PC-3 (cell line): ENCODE measurements at regions of chr16 and their contacts with region 1.

Region 1: GRCh38 chr16:52912565-52913173 is 140.0 kb downstream of the CHD9NB start:
- DNase-seq: peak; percentile 66
- ATAC-seq: peak; percentile 64; the same call in 1 of the 2 replicates
- H3K4me3 ChIP-seq: no peak overlapping the region
- H3K27ac ChIP-seq: no peak overlapping the region
- H3K4me1 ChIP-seq: no peaks in the 10 kb centered on the region
- H3K27me3 ChIP-seq: no peaks in the 10 kb centered on the region
- CTCF ChIP-seq: peak; percentile 75

Region 2: DNA sequence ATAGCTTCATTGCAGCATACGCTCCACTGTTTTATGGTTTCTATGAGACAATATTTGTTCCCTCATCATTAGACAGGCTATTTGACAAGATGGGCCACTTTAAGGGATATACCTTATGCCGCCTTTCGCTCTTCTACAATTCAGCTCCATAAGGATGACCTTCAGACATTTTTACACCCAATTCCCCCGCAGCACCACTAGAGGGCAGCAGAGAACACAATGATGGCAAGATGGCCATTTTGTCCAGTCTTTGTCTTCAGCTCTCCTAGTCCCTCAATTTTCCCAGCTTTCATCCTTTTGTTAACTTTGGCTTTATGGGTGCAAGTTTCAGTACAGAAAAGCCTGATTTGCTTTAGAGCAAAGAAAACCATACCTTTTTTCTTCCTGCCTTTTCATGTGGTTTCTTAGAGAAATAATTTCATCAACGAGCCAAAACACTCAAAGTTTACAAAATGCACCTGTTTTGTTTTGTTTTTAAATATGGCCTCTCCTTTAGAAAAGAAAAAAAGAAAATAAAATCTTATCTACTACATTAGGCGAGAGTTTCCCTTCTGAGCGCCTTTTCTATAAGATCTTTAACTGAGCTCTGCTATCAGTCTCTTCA is 721.0 kb before region 1 on chr16:
- CTCF ChIA-PET with region 1: interaction called, 4 read pairs
- POLR2A ChIA-PET with region 1: no interaction called
- intact Hi-C with region 1: loop called (anchors 5 kb)
- DNase-seq: peak; percentile 63
- ATAC-seq: no peak
- H3K4me3 ChIP-seq: no peak overlapping the region
- H3K27ac ChIP-seq: no peak overlapping the region
- H3K4me1 ChIP-seq: no peaks in the 10 kb centered on the region
- H3K27me3 ChIP-seq: no peaks in the 10 kb centered on the region
- CTCF ChIP-seq: peak; percentile 77

Region 3: GRCh38 chr16:52861614-52862022 is 51.1 kb before region 1 on chr16:
- CTCF ChIA-PET with region 1: no interaction called
- POLR2A ChIA-PET with region 1: no interaction called
- intact Hi-C with region 1: no loop called
- DNase-seq: peak; percentile 6
- ATAC-seq: no peak
- H3K4me3 ChIP-seq: no peak overlapping the region
- H3K27ac ChIP-seq: no peak overlapping the region
- H3K4me1 ChIP-seq: no peaks in the 10 kb centered on the region
- H3K27me3 ChIP-seq: no peaks in the 10 kb centered on the region
- CTCF ChIP-seq: no peak; the same call in 1 of the 2 replicates